Activated naive CD4-positive, alpha-beta T cell treated with anti-CD3 and anti-CD28 coated beads, Interleukin-2, amount 10 ng/mL, durations not matched to agents 7 days and 5 days (primary cell): ENCODE measurements at regions of chr5 and their contacts with region 1.

Region 1: DNA sequence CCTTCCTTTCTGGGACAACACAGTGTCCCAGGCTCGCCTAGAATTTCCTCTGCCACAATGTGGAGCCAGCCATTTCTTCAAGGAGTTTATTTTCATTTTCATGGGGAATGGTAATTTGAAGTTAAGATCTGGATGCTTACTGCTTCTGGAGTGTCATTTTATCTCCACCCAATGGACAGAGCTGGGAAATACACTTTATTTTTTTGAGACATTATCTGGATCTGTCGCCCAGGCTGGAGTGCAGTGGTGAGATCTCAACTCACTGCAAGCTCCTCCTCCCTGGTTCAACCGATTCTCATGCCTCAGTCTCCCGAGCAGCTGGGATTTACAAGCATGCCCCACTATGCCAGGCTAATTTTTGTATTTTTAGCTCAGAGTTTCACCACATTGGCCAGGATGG is 12.7 kb upstream of the THG1L start:
- DNase-seq: peak; percentile 31
- H3K4me3 Mint-ChIP-seq: no peak overlapping the region
- H3K27ac Mint-ChIP-seq: no peak overlapping the region
- H3K4me1 Mint-ChIP-seq: peaks cover 25% of the 10 kb centered on the region
- H3K27me3 Mint-ChIP-seq: no peaks in the 10 kb centered on the region

Region 2: DNA sequence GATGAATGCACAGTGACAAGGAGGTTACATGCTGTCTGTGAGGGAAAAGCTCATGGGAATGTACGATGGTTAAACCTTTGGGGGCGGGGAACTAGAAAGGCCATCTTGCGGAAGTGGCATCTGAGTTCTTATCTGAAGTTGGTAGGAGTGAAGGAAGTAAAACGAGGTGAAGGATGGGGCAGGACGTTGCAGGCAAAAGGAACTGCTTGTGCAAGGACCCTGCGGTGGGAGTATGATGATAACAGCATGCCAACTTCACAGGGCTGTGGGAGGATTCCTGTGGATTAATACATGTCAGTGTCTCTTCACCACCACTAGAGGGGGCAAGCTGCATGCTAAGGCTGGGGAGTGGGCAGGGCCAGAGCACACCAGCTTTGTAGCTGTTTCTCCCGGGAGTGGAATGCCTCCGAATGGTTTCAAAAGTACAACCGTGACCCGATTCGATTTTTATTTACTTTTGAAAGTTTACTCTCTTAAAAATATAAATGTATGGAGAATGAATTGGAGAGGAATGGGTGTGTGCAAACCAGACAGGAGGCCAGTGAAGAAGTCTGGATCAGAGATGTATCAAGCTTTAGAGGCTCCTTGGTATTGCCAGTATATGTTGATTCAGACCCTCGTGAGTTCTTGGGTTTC is 390.1 kb before region 1 on chr5:
- CTCF ChIA-PET with region 1: interaction called, 35 read pairs
- DNase-seq: peak; percentile 65
- H3K4me3 Mint-ChIP-seq: peak overlapping the region; percentile 0
- H3K27ac Mint-ChIP-seq: peak overlapping the region; percentile 83
- H3K4me1 Mint-ChIP-seq: peaks cover 39% of the 10 kb centered on the region
- H3K27me3 Mint-ChIP-seq: no peaks in the 10 kb centered on the region

Region 3: GRCh38 chr5:157431544-157432200 is 286.8 kb before region 1 on chr5:
- CTCF ChIA-PET with region 1: interaction called, 38 read pairs
- DNase-seq: peak; percentile 38
- H3K4me3 Mint-ChIP-seq: no peak overlapping the region
- H3K27ac Mint-ChIP-seq: no peak overlapping the region
- H3K4me1 Mint-ChIP-seq: peaks cover 9% of the 10 kb centered on the region
- H3K27me3 Mint-ChIP-seq: peaks cover 40% of the 10 kb centered on the region

Region 4: DNA sequence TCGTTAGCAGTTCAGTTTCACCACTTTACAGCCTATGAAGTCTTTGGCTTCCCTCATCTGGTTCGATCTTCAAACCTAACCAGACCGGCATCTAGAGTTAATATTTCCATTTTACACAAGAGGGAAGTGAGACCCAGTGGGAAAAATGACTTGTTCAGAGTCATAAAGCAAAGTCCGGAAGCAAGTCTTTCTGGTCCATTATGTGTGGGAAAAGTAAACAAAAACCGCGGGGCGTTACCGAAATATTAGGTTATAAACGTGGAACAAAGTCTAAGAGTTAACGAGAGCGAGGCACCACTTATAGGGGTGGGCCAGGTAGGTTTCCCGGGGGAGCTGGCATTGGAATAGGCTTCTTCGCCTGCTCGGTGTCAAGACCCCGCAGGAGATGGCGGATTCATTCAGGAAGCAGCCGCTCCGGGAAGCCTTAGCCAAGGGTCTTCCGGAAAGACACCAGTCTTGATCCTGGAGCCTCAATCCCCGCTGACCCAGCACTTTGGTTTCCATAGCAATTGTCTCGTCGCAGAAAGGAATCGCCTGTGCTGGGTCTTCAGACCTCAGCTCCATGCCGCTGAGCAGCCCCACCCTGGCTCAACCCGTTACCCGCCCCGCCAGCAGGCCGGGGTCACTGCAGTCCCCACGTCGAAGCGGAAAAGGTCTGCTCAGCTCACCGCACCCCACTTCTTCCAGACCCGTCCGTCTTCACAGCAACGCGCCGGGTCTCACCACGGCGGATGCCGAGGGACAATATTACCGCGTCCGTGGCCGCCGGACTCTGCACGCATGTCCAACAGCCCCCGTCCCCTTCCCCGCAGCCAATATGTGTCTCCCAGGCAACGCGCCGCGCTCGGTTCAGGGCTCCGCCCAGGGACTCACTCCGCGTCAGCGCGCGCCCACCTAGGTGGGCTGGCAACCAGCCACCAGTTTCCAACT is 47.6 kb before region 1 on chr5 and contains the start of gene C5orf52:
- CTCF ChIA-PET with region 1: interaction called, 31 read pairs
- DNase-seq: peak; percentile 43
- H3K4me3 Mint-ChIP-seq: peak within 1 kb of the TSS; percentile 83
- H3K27ac Mint-ChIP-seq: peak within 1 kb of the TSS; percentile 60
- H3K4me1 Mint-ChIP-seq: peaks cover 30% of the 10 kb centered on the region
- H3K27me3 Mint-ChIP-seq: peaks cover 66% of the 10 kb centered on the region

Region 5: GRCh38 chr5:157743163-157744050 is 24.9 kb after region 1 on chr5 and contains the start of gene LSM11:
- CTCF ChIA-PET with region 1: interaction called, 20 read pairs
- DNase-seq: peak; percentile 91
- H3K4me3 Mint-ChIP-seq: peak within 1 kb of the TSS; percentile 85
- H3K27ac Mint-ChIP-seq: peak within 1 kb of the TSS; percentile 78
- H3K4me1 Mint-ChIP-seq: peaks cover 36% of the 10 kb centered on the region
- H3K27me3 Mint-ChIP-seq: no peaks in the 10 kb centered on the region